Sciatic nerve (tissue), 2 donors: ENCODE measurements at regions of chr2 and their contacts with region 1.

Region 1: DNA sequence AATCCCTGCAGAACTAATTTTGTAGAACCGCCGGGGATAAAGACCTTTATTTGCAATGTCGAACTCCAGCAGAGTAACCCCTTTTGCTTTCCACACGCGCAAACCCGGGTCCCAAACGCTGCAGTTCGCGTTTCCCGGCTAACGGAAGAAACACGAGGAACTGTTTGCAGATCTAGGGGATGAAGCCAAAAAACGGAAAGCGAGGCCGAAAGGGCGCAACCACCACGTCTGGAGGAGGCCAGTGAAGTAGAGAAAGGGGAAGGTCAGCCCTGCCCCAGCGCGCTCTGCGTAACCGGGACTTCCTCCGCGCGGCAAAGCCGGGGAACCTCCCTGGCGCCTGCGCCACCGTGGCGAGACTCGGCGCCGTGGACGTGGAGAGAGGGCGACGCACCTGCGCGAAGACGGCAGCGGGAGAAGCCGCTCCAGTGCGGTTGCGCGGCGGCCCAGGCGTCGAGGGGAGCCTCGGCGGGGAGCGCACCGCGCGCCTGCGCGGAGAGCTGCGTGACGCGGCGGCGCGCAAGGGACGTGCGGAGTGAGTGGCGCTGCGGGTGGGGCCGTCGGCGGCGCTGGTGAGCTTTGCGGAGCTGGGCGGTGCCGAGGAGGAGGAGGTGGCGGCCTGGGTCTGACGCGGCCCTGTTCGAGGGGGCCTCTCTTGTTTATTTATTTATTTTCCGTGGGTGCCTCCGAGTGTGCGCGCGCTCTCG is at the start of gene PPP1CB:
- DNase-seq: peak; percentile 95
- ATAC-seq: peak; percentile 93
- total RNA-seq, gene PPP1CB: 210 TPM

Region 2: GRCh38 chr2:28594289-28595108 is 156.9 kb before region 1 on chr2:
- intact Hi-C with region 1: loop called (anchors 10 kb)
- DNase-seq: peak; percentile 94
- ATAC-seq: peak; percentile 88